ENCODE measurements at regions of chr10 and their contacts with region 1.

Region 1: DNA sequence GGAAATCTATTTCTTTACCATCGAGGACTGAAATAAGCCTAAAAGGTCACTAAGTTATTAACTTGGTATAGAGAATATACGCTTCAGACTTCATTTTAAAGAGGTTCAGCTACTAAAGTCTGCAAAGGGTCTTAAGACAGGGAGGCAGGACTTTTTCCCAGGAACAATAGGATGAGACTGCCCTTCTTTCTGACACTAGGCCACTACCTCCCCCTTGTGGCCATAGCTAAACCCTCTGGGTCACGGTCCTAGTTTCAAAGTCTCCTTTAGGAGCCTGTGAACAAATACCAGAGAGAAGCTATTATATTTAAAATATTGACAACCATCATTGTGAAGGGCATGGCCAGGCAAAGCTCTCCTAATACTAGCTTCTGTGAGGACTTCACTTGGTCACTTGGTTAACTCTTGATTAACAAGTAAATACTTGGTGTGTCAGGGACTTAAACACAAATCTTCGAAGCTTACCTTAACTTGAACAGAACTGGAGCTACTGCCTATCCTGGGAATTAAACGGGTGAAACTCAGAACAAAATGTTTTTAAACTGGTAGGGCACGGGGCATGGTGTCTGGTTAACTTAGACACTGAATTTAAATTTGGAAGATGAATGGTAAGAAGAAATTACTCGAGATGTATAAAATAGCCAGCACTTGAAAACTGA is 75.6 kb downstream of the CCDC6 start:
- DNase-seq: peak; percentile 6 to 29 (median 15)
- H3K4me3 ChIP-seq: no peak overlapping the region
- H3K4me3 Mint-ChIP-seq: no peak overlapping the region
- H3K27ac ChIP-seq: no peak overlapping the region
- H3K27ac Mint-ChIP-seq: no peak overlapping the region
- H3K4me1 ChIP-seq: peaks cover 4 to 8% of the 10 kb centered on the region in 2 donors
- H3K4me1 Mint-ChIP-seq: peaks cover 15% of the 10 kb centered on the region
- H3K27me3 ChIP-seq: no peaks in the 10 kb centered on the region
- H3K27me3 Mint-ChIP-seq: peaks cover 0 to 2% (median 0%) of the 10 kb centered on the region in 3 donors
- CTCF ChIP-seq: peak; percentile 84

Region 2: GRCh38 chr10:59906417-59907202 is 75.9 kb after region 1 on chr10 and contains the start of gene CCDC6:
- intact Hi-C with region 1: loop called in 1 of 2 experiments (anchors 10 kb)
- DNase-seq: peak; percentile 84 to 87 (median 85)
- H3K4me3 ChIP-seq: peak within 1 kb of the TSS; percentile 64 to 95 (median 83)
- H3K4me3 Mint-ChIP-seq: peak within 1 kb of the TSS; percentile 95 to 98
- H3K27ac ChIP-seq: peak within 1 kb of the TSS; percentile 73 to 80
- H3K27ac Mint-ChIP-seq: peak within 1 kb of the TSS; percentile 78 to 94 (median 88)
- H3K4me1 ChIP-seq: peaks cover 43 to 48% of the 10 kb centered on the region in 2 donors
- H3K4me1 Mint-ChIP-seq: peaks cover 51% of the 10 kb centered on the region
- H3K27me3 ChIP-seq: no peaks in the 10 kb centered on the region
- H3K27me3 Mint-ChIP-seq: peaks cover 0 to 2% (median 2%) of the 10 kb centered on the region in 3 donors
- CTCF ChIP-seq: peak; percentile 90
- polyA plus RNA-seq, gene CCDC6: 4.2 to 13.5 (median 6.2) TPM

Region 3: GRCh38 chr10:59991661-59992060 is 160.9 kb after region 1 on chr10:
- intact Hi-C with region 1: no loop called
- DNase-seq: peak; percentile 78 to 88 (median 83)
- H3K4me3 ChIP-seq: peak overlapping the region; percentile 21 to 59 (median 27)
- H3K4me3 Mint-ChIP-seq: peak overlapping the region; percentile 60 to 88
- H3K27ac ChIP-seq: peak overlapping the region in 1 of 2 donors; percentile 29
- H3K27ac Mint-ChIP-seq: peak overlapping the region in 6 of 7 donors; percentile 21 to 84 (median 77)
- H3K4me1 ChIP-seq: peaks cover 6 to 12% of the 10 kb centered on the region in 2 donors
- H3K4me1 Mint-ChIP-seq: peaks cover 12% of the 10 kb centered on the region
- H3K27me3 ChIP-seq: no peaks in the 10 kb centered on the region
- H3K27me3 Mint-ChIP-seq: no peaks in the 10 kb centered on the region
- CTCF ChIP-seq: no peak